Ascending aorta (tissue), 2 donors: ENCODE measurements at regions of chr11 and their contacts with region 1.

Region 1: GRCh38 chr11:118907051-118908042 is 18.4 kb downstream of the BCL9L start:
- DNase-seq: peak in 1 of 2 donors; percentile 93
- H3K4me3 ChIP-seq: peak overlapping the region in 1 of 2 donors; percentile 9
- H3K27ac ChIP-seq: peak overlapping the region; percentile 73 to 97
- H3K4me1 ChIP-seq: peaks cover 14 to 54% of the 10 kb centered on the region in 2 donors
- H3K27me3 ChIP-seq: no peaks in the 10 kb centered on the region
- CTCF ChIP-seq: peak; percentile 85 to 97 (median 95)

Region 2: DNA sequence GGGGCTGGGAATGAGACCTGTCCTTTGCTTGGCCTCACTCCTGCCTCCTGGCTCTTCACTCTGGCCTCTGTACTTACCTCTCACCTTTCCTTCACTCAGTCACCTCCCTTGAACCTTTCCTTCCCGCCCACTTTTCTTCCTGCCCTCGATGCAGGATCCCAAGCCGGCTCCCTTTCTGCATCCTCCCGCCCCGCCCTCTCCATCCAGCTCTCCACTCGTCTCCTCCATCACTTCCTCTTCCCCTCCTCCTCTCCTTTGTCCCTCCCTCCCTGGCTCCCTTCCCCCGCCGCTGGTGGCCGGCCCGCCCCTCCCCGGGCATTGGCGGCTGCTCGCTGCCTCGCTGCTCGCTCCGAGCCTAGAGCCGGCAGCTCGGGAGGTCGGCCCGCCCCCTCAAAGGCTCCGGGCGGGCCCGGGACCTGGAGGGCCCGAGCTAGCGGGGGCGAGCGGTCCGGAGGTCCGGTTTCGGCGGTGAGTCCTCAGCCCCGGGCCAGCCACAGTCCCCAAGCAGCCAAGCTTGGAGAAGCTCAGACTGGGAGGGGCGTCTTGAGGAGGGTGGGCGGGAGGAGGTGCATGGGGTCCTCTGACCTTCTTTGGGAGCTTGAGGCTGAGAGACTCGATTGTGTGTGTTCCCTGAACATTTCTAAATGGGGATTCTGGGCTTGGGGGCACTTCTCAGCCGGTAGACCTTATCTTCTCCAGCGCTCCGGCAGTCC is 286.1 kb before region 1 on chr11:
- intact Hi-C with region 1: loop called (anchors 5 kb)
- DNase-seq: peak in 1 of 2 donors; percentile 95
- H3K4me3 ChIP-seq: peak overlapping the region; percentile 73
- H3K27ac ChIP-seq: peak overlapping the region; percentile 95 to 99
- H3K4me1 ChIP-seq: peaks cover 31 to 67% of the 10 kb centered on the region in 2 donors
- H3K27me3 ChIP-seq: no peaks in the 10 kb centered on the region
- CTCF ChIP-seq: no peak

Region 3: DNA sequence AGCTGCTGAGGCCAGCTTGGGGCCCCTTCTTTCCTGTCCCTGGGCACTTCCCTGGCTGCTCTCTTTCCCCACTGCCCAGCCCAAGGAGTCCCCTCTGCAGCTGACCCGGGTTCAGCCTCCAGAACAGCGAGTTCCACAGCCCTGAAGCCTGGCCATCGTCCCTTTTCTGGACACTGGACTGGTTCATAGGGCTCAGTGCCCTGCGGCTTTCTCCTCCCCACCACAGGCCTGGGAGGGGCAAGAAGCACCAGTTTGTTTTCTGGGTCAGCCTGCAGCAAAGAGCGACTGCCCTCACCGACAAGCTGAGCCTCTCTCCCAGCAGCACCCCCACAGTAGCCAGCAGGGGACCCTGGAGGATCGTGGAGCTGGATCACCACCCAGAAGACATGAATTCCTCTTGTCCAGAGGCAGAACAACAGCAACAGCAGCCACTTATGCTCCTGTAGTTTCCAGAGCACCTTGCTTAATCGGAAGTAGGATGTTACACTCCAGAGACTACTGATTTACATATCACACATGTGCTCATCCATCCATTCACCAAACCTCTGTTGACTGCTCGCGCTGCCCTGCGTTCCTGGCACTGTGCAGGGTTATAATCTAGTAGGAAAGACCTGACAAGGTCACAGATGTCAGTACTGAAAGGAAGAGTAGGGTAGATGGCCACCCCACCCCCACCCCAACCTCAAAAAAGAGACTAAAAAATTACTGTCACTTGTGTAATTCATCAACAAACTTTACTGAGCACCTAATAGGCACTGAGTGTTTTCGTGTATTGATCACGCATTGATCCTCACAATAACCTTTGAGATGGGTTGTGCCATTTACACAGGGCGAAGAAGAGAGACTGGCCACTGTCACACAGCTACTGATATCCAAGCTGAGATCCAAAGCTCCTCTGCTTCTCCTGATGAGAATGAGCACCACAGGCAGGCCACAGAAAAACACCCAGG is 36.7 kb before region 1 on chr11:
- intact Hi-C with region 1: no loop called
- DNase-seq: peak in 1 of 2 donors; percentile 89
- H3K4me3 ChIP-seq: peak overlapping the region; percentile 28 to 42
- H3K27ac ChIP-seq: peak overlapping the region; percentile 90
- H3K4me1 ChIP-seq: peaks cover 5 to 15% of the 10 kb centered on the region in 2 donors
- H3K27me3 ChIP-seq: no peaks in the 10 kb centered on the region
- CTCF ChIP-seq: peak in 1 of 3 experiments; percentile 29

Region 4: DNA sequence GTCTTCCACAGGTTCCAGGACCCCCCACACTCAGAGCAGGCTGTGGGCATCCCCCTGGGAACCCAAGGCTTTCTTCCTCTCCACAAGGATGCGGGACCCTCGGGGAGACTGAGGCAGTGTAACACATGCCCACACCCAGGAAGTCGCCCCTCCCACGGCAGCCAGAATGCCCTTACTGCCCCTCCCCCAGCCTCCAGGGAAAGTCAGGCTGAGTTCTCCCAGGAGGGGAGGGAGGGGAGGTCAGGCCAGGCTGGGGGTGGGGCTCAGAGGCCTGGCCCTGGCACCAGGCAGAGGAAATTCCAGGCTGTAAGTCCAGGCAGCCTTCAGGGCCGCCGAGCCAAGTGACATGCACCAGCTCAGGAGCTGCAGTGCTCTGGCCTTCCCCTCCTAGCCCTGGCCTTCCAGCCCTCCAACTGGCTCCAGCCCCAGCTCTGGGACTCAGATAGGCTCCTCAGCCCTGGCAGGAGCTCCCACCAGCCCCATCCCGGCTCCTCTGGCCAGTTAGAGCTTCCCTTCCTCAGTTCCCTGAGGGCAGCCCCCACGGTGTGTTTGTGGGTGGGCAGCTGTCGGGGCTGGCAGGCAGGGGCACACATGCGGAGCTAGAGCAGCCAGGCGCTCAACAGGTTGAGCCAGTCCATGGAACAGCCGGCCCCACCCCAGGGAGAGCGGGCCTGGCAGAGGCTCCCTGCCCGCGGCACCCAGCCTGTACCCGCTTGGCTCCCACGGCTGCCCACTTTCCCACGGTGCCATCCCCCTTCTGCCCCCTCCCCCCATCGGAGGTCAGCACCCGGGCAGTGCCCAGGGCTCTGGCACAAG is 14.8 kb after region 1 on chr11:
- intact Hi-C with region 1: loop called (anchors 1 kb)
- DNase-seq: peak in 1 of 2 donors; percentile 94
- H3K4me3 ChIP-seq: peak overlapping the region; percentile 88 to 98
- H3K27ac ChIP-seq: peak overlapping the region; percentile 97
- H3K4me1 ChIP-seq: peaks cover 35 to 53% of the 10 kb centered on the region in 2 donors
- H3K27me3 ChIP-seq: no peaks in the 10 kb centered on the region
- CTCF ChIP-seq: no peak

Region 5: GRCh38 chr11:118956094-118956846 is 48.9 kb after region 1 on chr11 and contains the start of gene UPK2:
- intact Hi-C with region 1: loop called (anchors 1 kb)
- DNase-seq: peak; percentile 49 to 93
- H3K4me3 ChIP-seq: no peak within 1 kb of the TSS
- H3K27ac ChIP-seq: no peak within 1 kb of the TSS
- H3K4me1 ChIP-seq: no peaks in the 10 kb centered on the region
- H3K27me3 ChIP-seq: no peaks in the 10 kb centered on the region
- CTCF ChIP-seq: peak; percentile 91 to 98 (median 91)
- total RNA-seq, gene UPK2: not detected

Region 6: GRCh38 chr11:118988280-118988679 is 80.9 kb after region 1 on chr11:
- intact Hi-C with region 1: no loop called
- DNase-seq: no peak
- H3K4me3 ChIP-seq: no peak overlapping the region
- H3K27ac ChIP-seq: no peak overlapping the region
- H3K4me1 ChIP-seq: no peaks in the 10 kb centered on the region
- H3K27me3 ChIP-seq: no peaks in the 10 kb centered on the region
- CTCF ChIP-seq: no peak